ENCODE measurements at regions of chrX and their contacts with region 1.

Region 1: DNA sequence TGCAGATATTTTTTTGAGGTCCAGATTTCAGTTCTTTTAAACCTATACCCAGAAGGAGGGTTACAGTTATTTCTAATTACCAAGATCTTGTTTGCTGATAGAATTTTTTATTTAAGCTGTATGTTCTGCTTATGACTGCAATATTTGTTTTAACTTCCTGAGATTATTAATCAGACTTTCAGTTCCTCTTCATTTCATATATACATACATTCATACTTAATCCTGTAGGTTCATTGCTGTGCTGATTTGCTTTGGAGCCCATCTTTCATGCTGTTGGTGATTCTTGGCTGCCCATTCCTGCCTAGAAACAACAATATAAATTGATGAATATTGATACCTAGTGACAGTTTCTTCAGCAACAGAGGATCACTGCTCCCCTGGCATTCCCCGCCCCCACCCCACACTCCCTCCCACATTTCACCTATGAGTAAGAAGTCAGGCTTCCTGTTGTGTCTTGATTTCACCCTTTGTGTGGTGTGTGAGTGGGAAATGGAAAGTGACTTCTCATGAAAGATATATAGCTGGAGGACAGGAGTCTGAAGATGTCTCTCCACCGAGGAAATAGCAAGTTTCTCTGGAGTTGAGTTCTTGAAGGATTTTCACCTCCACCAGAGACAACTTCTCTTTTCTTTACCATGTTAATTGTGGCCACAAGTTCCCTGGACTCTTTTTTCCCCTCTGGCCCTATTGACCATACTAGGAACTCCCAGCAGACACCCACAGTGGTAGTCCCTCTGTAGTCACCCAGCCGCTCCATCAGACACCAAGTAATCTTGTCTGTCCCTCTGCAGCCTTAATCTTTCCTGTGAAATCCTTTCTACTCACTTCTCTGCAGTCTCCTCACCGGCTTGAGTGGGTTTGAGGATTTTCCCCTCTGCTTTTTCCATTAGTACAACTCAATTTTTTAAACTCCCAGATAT is 118.4 kb downstream of the ASB9 start:
- DNase-seq: no peak
- H3K4me3 ChIP-seq: no peak overlapping the region
- H3K27ac ChIP-seq: no peak overlapping the region
- H3K27me3 ChIP-seq: no peaks in the 10 kb centered on the region
- CTCF ChIP-seq: no peak

Region 2: DNA sequence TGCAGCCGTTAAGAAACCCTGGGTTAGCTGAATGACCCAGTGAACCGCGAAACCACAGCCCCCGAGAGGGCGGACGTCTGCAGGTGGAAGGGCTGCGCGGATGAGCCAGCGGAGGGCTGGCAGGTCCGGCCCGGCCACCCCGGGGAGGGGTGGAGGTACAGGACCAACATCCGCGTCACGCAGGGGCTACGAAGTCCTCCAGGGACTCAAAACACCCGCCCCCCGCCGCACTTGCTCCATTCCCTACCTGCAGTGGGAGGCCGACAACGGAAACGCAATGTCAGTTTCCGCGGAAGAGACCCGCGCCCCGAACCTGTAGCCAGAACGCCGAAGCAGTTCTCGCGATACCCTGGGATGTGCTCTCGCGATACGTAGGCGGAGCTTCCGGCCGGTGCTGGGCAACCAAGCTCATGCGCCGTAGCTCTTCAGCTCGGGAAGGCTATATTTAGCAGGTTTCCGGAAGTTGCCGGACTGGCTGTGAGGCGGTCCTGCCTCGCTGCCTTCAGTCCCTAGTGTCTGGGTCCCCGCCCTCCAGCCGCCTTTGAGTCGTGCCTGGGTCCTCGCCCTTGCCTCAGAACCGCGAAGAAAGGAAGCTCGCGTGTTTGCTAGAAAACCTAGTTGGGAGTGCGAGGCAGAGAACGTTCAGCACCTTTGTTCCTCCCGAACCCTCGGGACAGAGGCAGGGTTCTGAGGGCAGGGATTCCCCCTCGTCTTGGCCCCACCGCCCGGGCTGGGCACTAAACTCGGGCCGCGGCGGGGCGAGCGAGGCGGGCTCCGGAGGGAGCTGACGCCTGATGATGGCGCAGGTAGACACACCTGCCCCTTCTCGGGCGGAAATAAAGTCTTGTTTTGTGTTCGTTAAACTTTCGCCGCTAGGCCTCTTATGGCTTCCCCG is 1417.0 kb before region 1 on chrX and contains the starts of genes OFD1 and TRAPPC2:
- CTCF ChIA-PET with region 1: no interaction called
- POLR2A ChIA-PET with region 1: no interaction called
- DNase-seq: peak; percentile 87
- H3K4me3 ChIP-seq: peak within 1 kb of the TSS; percentile 78
- H3K27ac ChIP-seq: peak within 1 kb of the TSS; percentile 81
- H3K27me3 ChIP-seq: no peaks in the 10 kb centered on the region
- CTCF ChIP-seq: no peak
- polyA plus RNA-seq, gene OFD1: 9.9 and 14.1 TPM in 2 replicates
- polyA plus RNA-seq, gene TRAPPC2: 9.7 and 11.1 TPM in 2 replicates

Region 3: DNA sequence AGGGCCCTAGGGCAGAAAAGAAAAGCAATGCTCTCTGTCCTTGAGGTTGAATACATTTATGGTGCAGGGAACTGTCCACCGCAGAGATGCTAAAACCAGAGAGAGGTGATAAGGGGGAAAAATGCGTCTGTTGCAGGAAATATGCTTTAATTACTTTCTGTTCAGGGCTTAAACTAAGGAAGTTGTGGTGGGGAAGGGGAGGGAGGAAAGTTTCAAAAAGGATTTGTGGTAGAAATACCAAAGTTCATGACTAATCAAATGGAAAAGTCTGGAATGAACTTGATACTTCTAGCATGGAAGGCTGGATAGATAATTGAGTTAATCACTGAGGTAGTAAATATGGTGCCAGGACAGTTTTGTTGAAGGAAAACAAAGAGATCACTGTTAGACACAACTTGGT is 19.4 kb after region 1 on chrX:
- CTCF ChIA-PET with region 1: interaction called, 11 read pairs
- POLR2A ChIA-PET with region 1: no interaction called
- DNase-seq: no peak
- H3K4me3 ChIP-seq: no peak overlapping the region
- H3K27ac ChIP-seq: no peak overlapping the region
- H3K27me3 ChIP-seq: no peaks in the 10 kb centered on the region
- CTCF ChIP-seq: no peak

Region 4: DNA sequence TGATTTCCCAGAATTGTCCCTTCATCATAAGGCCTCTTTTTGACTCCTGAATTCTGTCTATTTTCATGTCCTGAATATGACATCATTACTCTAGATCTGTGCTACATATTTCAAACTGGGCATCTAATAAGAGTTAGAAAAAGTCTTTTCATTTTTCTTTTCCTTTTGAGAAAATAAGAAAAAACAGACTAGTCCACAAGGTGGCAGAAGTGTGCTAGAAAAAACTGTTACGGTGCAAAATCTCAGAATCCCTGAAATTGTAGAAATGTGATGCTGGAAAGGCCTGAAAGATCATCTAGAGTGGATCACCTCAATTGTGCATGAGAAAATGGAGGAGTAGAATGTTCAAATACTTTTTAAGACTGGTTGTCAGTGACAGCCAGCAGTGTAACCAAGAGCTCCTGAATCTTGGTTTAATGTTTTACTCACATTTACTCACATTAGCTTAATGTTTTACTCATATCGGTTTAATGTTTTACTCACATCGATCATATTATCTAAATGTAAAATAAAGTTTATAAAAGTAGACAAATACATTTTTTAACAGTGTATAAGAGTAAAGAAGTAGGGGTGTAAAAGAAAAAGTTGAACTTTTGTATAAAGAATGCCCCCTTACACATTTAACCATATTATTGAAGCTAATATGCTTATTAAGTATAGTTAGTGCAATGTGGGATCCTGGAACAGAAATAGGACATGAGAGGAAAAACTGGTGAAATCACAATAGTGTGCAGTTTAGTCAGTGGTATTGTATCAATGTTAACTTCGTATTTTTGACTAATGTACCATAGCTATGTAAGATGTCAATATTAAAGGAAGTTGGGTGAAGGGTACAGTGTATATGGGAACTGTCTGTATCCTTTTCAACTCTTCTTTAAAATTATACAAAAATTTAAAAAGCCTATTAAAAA is 148.7 kb after region 1 on chrX:
- CTCF ChIA-PET with region 1: no interaction called
- POLR2A ChIA-PET with region 1: no interaction called
- DNase-seq: no peak
- H3K4me3 ChIP-seq: no peak overlapping the region
- H3K27ac ChIP-seq: no peak overlapping the region
- H3K27me3 ChIP-seq: no peaks in the 10 kb centered on the region
- CTCF ChIP-seq: peak; percentile 49

Measured in AG04450 (cell line).